ENCODE measurements at regions of chr10 and their contacts with region 1.

Region 1: GRCh38 chr10:62632071-62632809 is 172.3 kb upstream of the ADO start:
- DNase-seq: peak; percentile 80
- ATAC-seq: peak; percentile 85
- H3K4me3 ChIP-seq: 0 out of 2 replicates have a peak overlapping the region, but pooled peaks have one; percentile 1
- H3K27ac ChIP-seq: peak overlapping the region; percentile 71
- H3K4me1 ChIP-seq: peaks cover 56% of the 10 kb centered on the region
- H3K27me3 ChIP-seq: no peaks in the 10 kb centered on the region
- CTCF ChIP-seq: no peak
- EP300 ChIP-seq: peak; percentile 75 to 94
- POLR2A ChIP-seq: no peak
- RAD21 ChIP-seq: peak; percentile 29; the same call in 1 of the 2 replicates

Region 2: GRCh38 chr10:62063795-62064472 is 568.3 kb before region 1 on chr10:
- CTCF ChIA-PET with region 1: no interaction called
- POLR2A ChIA-PET with region 1: no interaction called
- RAD21 ChIA-PET with region 1: no interaction called
- SMC1A ChIA-PET with region 1: no interaction called
- in situ Hi-C with region 1: no loop called
- intact Hi-C with region 1: no loop called
- DNase-seq: no peak
- ATAC-seq: no peak
- H3K4me3 ChIP-seq: no peak overlapping the region
- H3K27ac ChIP-seq: no peak overlapping the region
- H3K4me1 ChIP-seq: no peaks in the 10 kb centered on the region
- H3K27me3 ChIP-seq: no peaks in the 10 kb centered on the region
- CTCF ChIP-seq: no peak
- EP300 ChIP-seq: no peak
- POLR2A ChIP-seq: no peak
- RAD21 ChIP-seq: no peak

Region 3: GRCh38 chr10:62498271-62498670 is 134.0 kb before region 1 on chr10:
- CTCF ChIA-PET with region 1: no interaction called
- POLR2A ChIA-PET with region 1: no interaction called
- RAD21 ChIA-PET with region 1: no interaction called
- SMC1A ChIA-PET with region 1: no interaction called
- in situ Hi-C with region 1: no loop called
- intact Hi-C with region 1: no loop called
- DNase-seq: no peak
- ATAC-seq: no peak
- H3K4me3 ChIP-seq: no peak overlapping the region
- H3K27ac ChIP-seq: no peak overlapping the region
- H3K4me1 ChIP-seq: no peaks in the 10 kb centered on the region
- H3K27me3 ChIP-seq: peaks cover 2 to 10% of the 10 kb centered on the region in 2 experiments; a peak in 2 of 4 replicates
- CTCF ChIP-seq: no peak
- EP300 ChIP-seq: no peak
- POLR2A ChIP-seq: no peak
- RAD21 ChIP-seq: no peak

Region 4: GRCh38 chr10:62618576-62619412 is 13.4 kb before region 1 on chr10:
- CTCF ChIA-PET with region 1: interaction called, 9 read pairs
- POLR2A ChIA-PET with region 1: interaction called, 24 read pairs
- RAD21 ChIA-PET with region 1: interaction called, 10 read pairs
- SMC1A ChIA-PET with region 1: interaction called, 122 read pairs
- in situ Hi-C with region 1: no loop called
- intact Hi-C with region 1: loop called (anchors 2 kb)
- DNase-seq: no peak
- ATAC-seq: peak; percentile 58
- H3K4me3 ChIP-seq: no peak overlapping the region
- H3K27ac ChIP-seq: 0 out of 2 replicates have a peak overlapping the region, but pooled peaks have one; percentile 2
- H3K4me1 ChIP-seq: peaks cover 30% of the 10 kb centered on the region
- H3K27me3 ChIP-seq: no peaks in the 10 kb centered on the region
- CTCF ChIP-seq: no peak
- EP300 ChIP-seq: no peak
- POLR2A ChIP-seq: no peak
- RAD21 ChIP-seq: no peak

Region 5: GRCh38 chr10:62647375-62648092 is 15.3 kb after region 1 on chr10:
- CTCF ChIA-PET with region 1: interaction called, 64 read pairs
- POLR2A ChIA-PET with region 1: interaction called, 59 read pairs
- RAD21 ChIA-PET with region 1: interaction called, 97 read pairs
- SMC1A ChIA-PET with region 1: interaction called, 329 read pairs
- in situ Hi-C with region 1: no loop called
- intact Hi-C with region 1: no loop called
- DNase-seq: no peak
- ATAC-seq: peak; percentile 59
- H3K4me3 ChIP-seq: no peak overlapping the region
- H3K27ac ChIP-seq: no peak overlapping the region
- H3K4me1 ChIP-seq: peaks cover 29% of the 10 kb centered on the region
- H3K27me3 ChIP-seq: no peaks in the 10 kb centered on the region
- CTCF ChIP-seq: no peak
- EP300 ChIP-seq: peak; percentile 29 to 40; a peak in 1 of 4 replicates
- POLR2A ChIP-seq: no peak
- RAD21 ChIP-seq: no peak

Region 6: GRCh38 chr10:62811159-62811875 is 179.1 kb after region 1 on chr10:
- CTCF ChIA-PET with region 1: interaction called, 6 read pairs
- POLR2A ChIA-PET with region 1: interaction called, 7 read pairs
- RAD21 ChIA-PET with region 1: interaction called, 64 read pairs
- SMC1A ChIA-PET with region 1: interaction called, 82 read pairs
- in situ Hi-C with region 1: no loop called
- intact Hi-C with region 1: loop called (anchors 1 kb)
- DNase-seq: peak; percentile 85
- ATAC-seq: peak; percentile 62
- H3K4me3 ChIP-seq: peak overlapping the region; percentile 25; the same call in 1 of the 2 replicates
- H3K27ac ChIP-seq: peak overlapping the region; percentile 42; the same call in 1 of the 2 replicates
- H3K4me1 ChIP-seq: peaks cover 20% of the 10 kb centered on the region
- H3K27me3 ChIP-seq: no peaks in the 10 kb centered on the region
- CTCF ChIP-seq: no peak
- EP300 ChIP-seq: peak; percentile 80 to 86; a peak in 3 of 4 replicates
- POLR2A ChIP-seq: 0 out of 2 replicates have a peak, but pooled peaks have one; percentile 21
- RAD21 ChIP-seq: 0 out of 2 replicates have a peak, but pooled peaks have one; percentile 6

Region 7: GRCh38 chr10:62900829-62901571 is 268.8 kb after region 1 on chr10:
- CTCF ChIA-PET with region 1: no interaction called
- POLR2A ChIA-PET with region 1: no interaction called
- RAD21 ChIA-PET with region 1: no interaction called
- SMC1A ChIA-PET with region 1: no interaction called
- in situ Hi-C with region 1: no loop called
- intact Hi-C with region 1: no loop called
- DNase-seq: no peak
- ATAC-seq: no peak; the same call in 1 of the 3 replicates
- H3K4me3 ChIP-seq: no peak overlapping the region
- H3K27ac ChIP-seq: no peak overlapping the region
- H3K4me1 ChIP-seq: no peaks in the 10 kb centered on the region
- H3K27me3 ChIP-seq: no peaks in the 10 kb centered on the region
- CTCF ChIP-seq: no peak
- EP300 ChIP-seq: no peak
- POLR2A ChIP-seq: no peak
- RAD21 ChIP-seq: no peak